Tibial artery (tissue), 4 donors: ENCODE measurements at regions of chrX and their contacts with region 1.

Region 1: GRCh38 chrX:119516157-119516702 is 48.0 kb downstream of the SLC25A5 start:
- DNase-seq: no peak
- H3K4me3 ChIP-seq: no peak overlapping the region
- H3K27ac ChIP-seq: no peak overlapping the region
- H3K4me1 ChIP-seq: peaks cover 0 to 5% (median 0%) of the 10 kb centered on the region in 4 donors
- H3K27me3 ChIP-seq: no peaks in the 10 kb centered on the region
- CTCF ChIP-seq: peak; percentile 65 to 67

Region 2: GRCh38 chrX:119455264-119455663 is 61.0 kb before region 1 on chrX:
- intact Hi-C with region 1: no loop called
- DNase-seq: no peak
- H3K4me3 ChIP-seq: no peak overlapping the region
- H3K27ac ChIP-seq: no peak overlapping the region
- H3K4me1 ChIP-seq: no peaks in the 10 kb centered on the region
- H3K27me3 ChIP-seq: no peaks in the 10 kb centered on the region
- CTCF ChIP-seq: no peak

Region 3: DNA sequence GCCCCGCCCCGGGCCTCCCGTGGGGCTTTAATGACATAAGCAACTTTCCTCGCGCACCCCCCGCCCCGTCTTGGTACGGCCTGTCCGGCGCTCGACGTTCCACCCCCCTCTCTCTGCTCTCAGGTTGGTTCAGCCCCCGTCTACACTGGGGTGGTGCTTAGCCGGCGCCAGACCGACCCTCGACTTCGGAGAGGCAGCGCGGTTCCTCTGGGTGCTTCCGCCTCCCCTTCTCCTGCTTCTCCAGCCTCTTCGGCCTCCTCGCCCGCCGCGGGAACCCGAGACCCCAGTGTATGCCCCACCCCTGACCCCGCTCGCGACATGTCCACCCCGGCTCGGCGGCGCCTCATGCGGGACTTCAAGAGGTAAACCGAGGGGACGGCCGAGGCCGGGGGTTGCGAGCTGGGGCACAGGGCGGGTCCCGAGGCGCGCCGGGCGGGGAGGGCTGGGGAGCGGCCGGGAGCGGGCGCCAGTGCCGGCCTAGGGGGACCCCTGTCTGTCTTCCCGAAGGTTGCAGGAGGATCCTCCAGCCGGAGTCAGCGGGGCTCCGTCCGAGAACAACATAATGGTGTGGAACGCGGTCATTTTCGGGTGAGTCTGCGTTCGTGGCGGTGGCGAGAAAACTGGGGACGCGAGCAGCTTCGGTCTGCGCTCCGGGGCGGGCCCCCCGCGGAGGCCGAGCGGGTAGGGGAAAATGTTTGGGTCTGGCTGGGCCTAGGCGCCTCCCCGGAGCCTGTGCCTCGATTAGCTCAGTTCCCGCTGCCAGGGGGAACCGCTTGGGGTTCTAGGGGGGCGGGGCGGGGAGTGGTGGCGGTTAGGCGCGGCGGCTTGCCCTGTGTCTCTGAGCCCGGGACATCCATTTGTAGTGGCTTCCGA is 58.4 kb after region 1 on chrX and contains the start of gene UBE2A:
- intact Hi-C with region 1: loop called (anchors 10 kb)
- DNase-seq: peak; percentile 90 to 93
- H3K4me3 ChIP-seq: peak within 1 kb of the TSS; percentile 81 to 84
- H3K27ac ChIP-seq: peak within 1 kb of the TSS; percentile 95 to 97
- H3K4me1 ChIP-seq: peaks cover 0 to 14% (median 4%) of the 10 kb centered on the region in 4 donors
- H3K27me3 ChIP-seq: no peaks in the 10 kb centered on the region
- CTCF ChIP-seq: peak in 1 of 2 experiments; percentile 34